HepG2 (cell line): ENCODE measurements at regions of chr15 and their contacts with region 1.

Region 1: GRCh38 chr15:68820295-68821189 is at the start of gene ANP32A:
- DNase-seq: peak; percentile 85
- ATAC-seq: peak; percentile 80
- H3K4me3 ChIP-seq: peak within 1 kb of the TSS; percentile 83 to 100 (median 84)
- H3K27ac ChIP-seq: peak within 1 kb of the TSS; percentile 97
- H3K4me1 ChIP-seq: peaks cover 26% of the 10 kb centered on the region
- H3K27me3 ChIP-seq: no peaks in the 10 kb centered on the region; a peak in 1 of 5 replicates
- CTCF ChIP-seq: no peak
- EP300 ChIP-seq: no peak
- POLR2A ChIP-seq: peak; percentile 12 to 77; a peak in 3 of 4 replicates
- RAD21 ChIP-seq: no peak
- total RNA-seq, gene ANP32A: 206 and 323 TPM in 2 replicates

Region 2: GRCh38 chr15:68614286-68615035 is 206.1 kb before region 1 on chr15:
- CTCF ChIA-PET with region 1: no interaction called
- POLR2A ChIA-PET with region 1: no interaction called
- in situ Hi-C with region 1: no loop called
- intact Hi-C with region 1: no loop called
- DNase-seq: no peak
- ATAC-seq: no peak
- H3K4me3 ChIP-seq: no peak overlapping the region
- H3K27ac ChIP-seq: no peak overlapping the region
- H3K4me1 ChIP-seq: no peaks in the 10 kb centered on the region
- H3K27me3 ChIP-seq: peaks cover 1 to 11% of the 10 kb centered on the region in 2 experiments; a peak in 3 of 5 replicates
- CTCF ChIP-seq: no peak
- EP300 ChIP-seq: no peak
- POLR2A ChIP-seq: no peak
- RAD21 ChIP-seq: no peak

Region 3: DNA sequence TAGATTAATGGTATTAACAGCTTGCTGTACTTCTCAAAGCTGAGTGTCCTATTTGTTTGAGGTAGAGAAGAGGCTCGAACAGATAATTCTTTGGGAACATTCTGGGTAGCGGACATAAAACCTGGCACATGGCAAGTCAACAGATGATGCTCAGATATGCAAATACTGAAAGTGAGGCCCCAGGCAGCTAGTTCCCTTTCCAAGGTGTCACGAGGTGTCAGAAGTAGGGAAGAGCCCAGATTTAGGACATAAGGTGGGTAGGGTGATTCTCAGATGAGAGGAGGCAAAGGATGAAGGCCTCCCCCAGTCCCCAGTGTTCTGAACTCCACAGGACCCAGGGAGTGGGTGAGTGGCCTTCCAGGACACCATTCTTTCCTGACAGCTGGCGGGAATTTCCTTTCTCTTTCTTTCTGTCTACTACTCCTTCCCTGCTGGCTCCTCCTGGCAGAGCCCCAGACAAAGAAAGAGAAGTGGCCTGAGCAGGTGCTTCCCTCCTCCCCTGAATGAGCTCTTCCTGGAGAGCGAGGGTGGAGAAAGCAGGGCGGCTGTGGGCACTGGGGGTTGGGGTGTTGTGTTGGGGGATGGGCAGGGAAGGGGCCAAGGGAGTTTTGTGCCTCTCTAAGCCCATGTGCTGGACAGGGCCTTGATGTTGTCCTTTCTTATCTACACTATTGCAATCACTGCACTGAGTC is 154.3 kb before region 1 on chr15:
- CTCF ChIA-PET with region 1: no interaction called
- POLR2A ChIA-PET with region 1: no interaction called
- in situ Hi-C with region 1: no loop called
- intact Hi-C with region 1: no loop called
- DNase-seq: no peak
- ATAC-seq: no peak
- H3K4me3 ChIP-seq: no peak overlapping the region
- H3K27ac ChIP-seq: no peak overlapping the region
- H3K4me1 ChIP-seq: no peaks in the 10 kb centered on the region
- H3K27me3 ChIP-seq: no peaks in the 10 kb centered on the region; a peak in 1 of 5 replicates
- CTCF ChIP-seq: no peak
- EP300 ChIP-seq: no peak
- POLR2A ChIP-seq: no peak
- RAD21 ChIP-seq: no peak

Region 4: DNA sequence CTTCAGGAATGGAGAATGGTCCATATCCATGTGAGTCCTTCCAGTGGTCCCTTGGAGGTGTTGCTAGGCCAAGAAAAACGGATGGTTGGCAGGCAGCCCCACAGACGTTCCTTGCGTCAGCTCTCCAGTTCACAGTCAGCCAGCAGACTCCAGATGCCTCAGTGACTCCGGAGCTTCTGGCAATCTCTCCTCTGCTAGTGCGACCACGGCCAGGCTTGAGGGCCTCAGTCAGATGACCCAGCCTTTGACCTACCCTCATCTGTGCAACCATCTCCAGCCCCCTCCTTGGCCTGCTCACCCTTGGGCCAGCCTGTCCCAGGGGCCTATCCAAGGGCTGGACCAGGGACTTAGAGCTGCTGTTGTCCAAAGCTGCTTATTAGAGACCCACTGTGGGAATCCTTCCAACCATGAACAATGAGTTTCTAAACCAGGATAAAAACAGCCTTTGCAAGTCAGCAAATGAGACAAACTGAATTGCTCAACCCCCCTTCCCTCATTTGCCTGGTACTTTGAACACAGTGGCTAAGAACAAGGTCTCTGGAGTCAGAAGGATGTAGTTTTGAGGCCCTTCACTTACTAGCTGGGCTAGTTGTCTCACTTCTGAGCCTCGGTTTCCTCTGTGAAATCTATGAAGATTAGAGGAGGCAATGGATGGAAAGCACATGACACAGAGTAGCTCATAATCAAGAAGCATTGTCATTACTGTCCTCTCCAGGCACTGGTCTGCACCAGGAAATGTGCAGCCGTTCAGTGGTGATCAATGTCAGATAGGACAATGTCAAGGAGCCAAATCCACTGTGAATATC is 44.7 kb before region 1 on chr15:
- CTCF ChIA-PET with region 1: no interaction called
- POLR2A ChIA-PET with region 1: no interaction called
- in situ Hi-C with region 1: loop called (anchors 5 kb)
- intact Hi-C with region 1: no loop called
- DNase-seq: no peak
- ATAC-seq: peak; percentile 41
- H3K4me3 ChIP-seq: no peak overlapping the region
- H3K27ac ChIP-seq: no peak overlapping the region
- H3K4me1 ChIP-seq: no peaks in the 10 kb centered on the region
- H3K27me3 ChIP-seq: no peaks in the 10 kb centered on the region; a peak in 1 of 5 replicates
- CTCF ChIP-seq: no peak
- EP300 ChIP-seq: no peak
- POLR2A ChIP-seq: no peak; a peak in 1 of 4 replicates
- RAD21 ChIP-seq: no peak